Activated T-helper 1 cell treated with anti-CD3 and anti-CD28 coated beads, Interleukin-12 subunit alpha, Interleukin-12 subunit beta, Interleukin-2, Interleukin-4 antibody, amounts not matched to agents 30 ng/mL and 10 ng/mL and 1 ng/mL, durations not matched to agents 14 hours and 24 hours and 36 hours (primary cell): ENCODE measurements at regions of chr4 and their contacts with region 1.

Region 1: DNA sequence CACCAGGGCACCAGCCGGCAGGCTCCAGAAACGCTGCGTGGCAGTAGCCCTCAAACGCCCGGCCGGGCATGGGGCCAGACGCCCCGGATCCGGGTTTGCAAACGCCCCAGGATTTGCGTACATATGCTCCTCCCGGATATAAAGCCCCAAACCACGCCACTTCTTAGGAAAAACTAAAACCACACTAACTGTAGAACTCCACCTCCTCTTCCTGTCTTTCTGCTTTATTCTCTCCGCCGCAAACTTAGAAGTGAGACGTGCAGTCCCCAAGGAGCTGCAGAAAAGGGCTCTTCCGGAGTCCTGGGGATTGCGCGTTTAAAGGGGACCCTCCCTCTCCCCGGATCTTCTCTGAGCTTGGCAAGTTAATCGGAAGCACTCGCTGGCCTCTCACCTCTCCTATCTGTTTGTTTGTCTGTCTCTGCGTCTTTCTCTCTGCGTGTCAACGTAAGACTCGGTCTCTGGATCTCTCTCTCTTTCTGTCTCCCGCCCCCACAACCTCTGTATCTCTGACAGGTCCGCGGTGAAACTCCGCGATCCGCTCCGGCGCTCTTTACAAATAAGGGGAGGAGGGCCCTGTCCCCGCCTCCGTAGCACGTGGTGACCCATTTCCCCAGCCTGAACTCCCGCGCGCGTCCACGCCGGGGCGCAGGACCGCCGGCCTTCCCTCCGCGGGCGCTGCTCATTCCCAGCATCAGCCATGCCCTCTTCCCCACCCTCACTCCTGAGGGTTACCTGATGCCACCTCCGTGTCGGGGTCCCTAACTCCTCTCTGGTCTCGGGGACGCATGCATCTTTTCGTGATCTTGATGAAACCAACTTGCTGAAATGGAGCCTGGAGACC is at the start of gene SLC39A8:
- DNase-seq: peak; percentile 86
- H3K4me3 Mint-ChIP-seq: peak within 1 kb of the TSS; percentile 83
- H3K27ac Mint-ChIP-seq: peak within 1 kb of the TSS; percentile 98
- H3K4me1 Mint-ChIP-seq: peaks cover 48% of the 10 kb centered on the region
- H3K27me3 Mint-ChIP-seq: peaks cover 3% of the 10 kb centered on the region
- total RNA-seq, gene SLC39A8: 85.2 and 87.8 TPM in 2 replicates

Region 2: DNA sequence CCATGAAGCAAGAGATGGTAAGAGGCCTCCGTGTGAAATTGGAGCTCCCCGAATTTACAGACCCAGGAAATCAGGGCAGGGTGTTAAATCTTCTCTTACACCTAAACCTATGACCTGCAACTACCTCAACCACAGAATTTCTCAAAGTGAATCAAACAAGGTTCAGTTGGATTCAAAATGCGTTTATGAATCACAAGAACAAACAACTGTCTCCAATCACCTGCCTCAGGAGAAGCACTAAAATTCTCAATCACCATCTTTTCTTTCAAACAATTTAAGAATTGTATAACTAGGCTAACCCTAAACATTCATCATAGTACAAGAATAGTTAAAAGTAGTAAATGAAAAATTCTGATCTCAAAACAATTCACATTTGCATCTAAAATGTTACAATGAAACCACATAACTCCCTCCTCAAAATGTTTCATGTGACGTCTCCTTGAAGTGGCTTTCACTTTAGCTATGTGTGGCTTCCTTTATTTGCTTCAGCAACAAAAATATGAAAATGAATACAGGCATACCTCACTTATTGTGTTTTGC is 1017.0 kb before region 1 on chr4:
- intact Hi-C with region 1: loop called (anchors 1 kb)
- DNase-seq: peak; percentile 21
- H3K4me3 Mint-ChIP-seq: peak overlapping the region; percentile 45
- H3K27ac Mint-ChIP-seq: peak overlapping the region; percentile 81
- H3K4me1 Mint-ChIP-seq: peaks cover 31% of the 10 kb centered on the region
- H3K27me3 Mint-ChIP-seq: peaks cover 24% of the 10 kb centered on the region

Region 3: GRCh38 chr4:102104278-102104677 is 240.9 kb before region 1 on chr4:
- intact Hi-C with region 1: no loop called
- DNase-seq: no peak
- H3K4me3 Mint-ChIP-seq: no peak overlapping the region
- H3K27ac Mint-ChIP-seq: no peak overlapping the region
- H3K4me1 Mint-ChIP-seq: no peaks in the 10 kb centered on the region
- H3K27me3 Mint-ChIP-seq: no peaks in the 10 kb centered on the region

Region 4: DNA sequence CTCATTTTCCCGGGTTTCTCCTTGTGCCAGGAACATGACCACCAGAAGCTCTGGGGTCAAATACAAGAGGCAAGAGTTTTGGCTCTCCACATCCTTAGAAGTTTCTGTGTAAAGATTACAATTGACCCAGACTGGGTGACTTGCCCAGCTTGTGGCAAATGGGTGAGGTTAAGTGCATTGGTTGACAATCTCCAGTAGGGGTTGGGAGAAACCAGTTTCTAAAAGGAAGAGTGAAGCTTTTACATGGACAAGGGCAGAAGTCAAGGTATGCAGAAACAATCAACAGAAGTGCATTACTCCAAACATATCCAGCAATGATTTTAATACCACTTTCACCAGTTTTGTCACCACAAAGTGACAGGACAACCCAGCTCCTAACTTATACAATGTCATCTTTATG is 89.7 kb before region 1 on chr4:
- intact Hi-C with region 1: loop called (anchors 1 kb)
- DNase-seq: no peak
- H3K4me3 Mint-ChIP-seq: no peak overlapping the region
- H3K27ac Mint-ChIP-seq: no peak overlapping the region
- H3K4me1 Mint-ChIP-seq: no peaks in the 10 kb centered on the region
- H3K27me3 Mint-ChIP-seq: no peaks in the 10 kb centered on the region

Region 5: DNA sequence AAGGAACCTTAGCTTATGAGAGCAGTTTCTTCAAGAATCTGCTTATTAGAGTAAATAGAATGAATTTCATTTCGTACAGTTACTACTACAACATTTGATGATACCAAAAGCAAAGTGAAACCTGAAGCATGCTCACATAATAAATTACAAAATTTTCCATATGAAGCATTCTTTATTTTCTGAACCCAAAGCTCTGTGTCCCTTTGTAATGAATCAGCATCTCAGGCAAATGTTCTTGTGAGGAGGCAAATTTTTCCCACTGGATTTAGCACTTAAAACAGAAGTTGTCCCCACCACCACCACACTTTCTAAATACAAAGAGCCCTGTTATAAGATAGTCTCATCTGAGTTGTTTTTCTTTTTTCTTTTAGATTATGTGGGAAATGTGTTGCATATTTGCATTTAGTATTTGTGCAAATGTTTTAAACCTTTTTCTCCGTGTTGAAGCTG is 85.3 kb after region 1 on chr4:
- intact Hi-C with region 1: loop called (anchors 1 kb)
- DNase-seq: no peak
- H3K4me3 Mint-ChIP-seq: peak overlapping the region; percentile 87
- H3K27ac Mint-ChIP-seq: peak overlapping the region; percentile 82
- H3K4me1 Mint-ChIP-seq: peaks cover 15% of the 10 kb centered on the region
- H3K27me3 Mint-ChIP-seq: peaks cover 5% of the 10 kb centered on the region

Region 6: DNA sequence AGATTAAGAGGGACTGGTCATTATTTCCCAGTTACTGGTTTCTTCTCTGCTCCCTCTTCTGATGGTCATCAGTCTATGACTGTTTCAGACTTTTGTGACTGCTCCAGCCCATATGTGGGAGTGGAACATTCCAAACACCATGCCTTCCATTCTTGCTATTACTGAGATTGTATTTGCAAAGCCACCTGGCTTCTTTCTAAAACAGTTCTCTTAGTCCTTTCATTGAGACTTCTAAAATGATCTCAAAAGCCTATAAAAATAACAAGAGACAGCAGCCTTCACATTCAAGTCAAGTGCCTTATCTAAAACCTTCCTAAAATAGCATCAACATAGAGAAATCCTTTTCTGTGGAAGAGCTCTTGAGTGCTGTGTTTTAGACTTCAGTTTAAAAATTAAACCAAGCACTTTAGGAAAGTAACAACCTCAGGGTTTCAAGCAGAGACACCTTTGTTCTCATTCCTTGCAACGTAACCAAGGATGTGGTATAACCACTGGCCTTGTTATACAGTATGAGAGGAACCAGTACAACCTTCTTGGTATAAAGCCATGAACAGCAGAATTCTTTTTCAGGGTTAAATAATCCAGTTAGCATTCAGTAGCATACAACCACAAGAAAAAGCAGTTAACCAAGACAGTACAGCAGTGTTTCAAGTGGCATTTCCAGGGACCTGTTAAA is 253.1 kb after region 1 on chr4:
- intact Hi-C with region 1: loop called (anchors 2 kb)
- DNase-seq: peak; percentile 34
- H3K4me3 Mint-ChIP-seq: peak overlapping the region; percentile 37
- H3K27ac Mint-ChIP-seq: peak overlapping the region; percentile 89
- H3K4me1 Mint-ChIP-seq: peaks cover 78% of the 10 kb centered on the region
- H3K27me3 Mint-ChIP-seq: no peaks in the 10 kb centered on the region

Region 7: DNA sequence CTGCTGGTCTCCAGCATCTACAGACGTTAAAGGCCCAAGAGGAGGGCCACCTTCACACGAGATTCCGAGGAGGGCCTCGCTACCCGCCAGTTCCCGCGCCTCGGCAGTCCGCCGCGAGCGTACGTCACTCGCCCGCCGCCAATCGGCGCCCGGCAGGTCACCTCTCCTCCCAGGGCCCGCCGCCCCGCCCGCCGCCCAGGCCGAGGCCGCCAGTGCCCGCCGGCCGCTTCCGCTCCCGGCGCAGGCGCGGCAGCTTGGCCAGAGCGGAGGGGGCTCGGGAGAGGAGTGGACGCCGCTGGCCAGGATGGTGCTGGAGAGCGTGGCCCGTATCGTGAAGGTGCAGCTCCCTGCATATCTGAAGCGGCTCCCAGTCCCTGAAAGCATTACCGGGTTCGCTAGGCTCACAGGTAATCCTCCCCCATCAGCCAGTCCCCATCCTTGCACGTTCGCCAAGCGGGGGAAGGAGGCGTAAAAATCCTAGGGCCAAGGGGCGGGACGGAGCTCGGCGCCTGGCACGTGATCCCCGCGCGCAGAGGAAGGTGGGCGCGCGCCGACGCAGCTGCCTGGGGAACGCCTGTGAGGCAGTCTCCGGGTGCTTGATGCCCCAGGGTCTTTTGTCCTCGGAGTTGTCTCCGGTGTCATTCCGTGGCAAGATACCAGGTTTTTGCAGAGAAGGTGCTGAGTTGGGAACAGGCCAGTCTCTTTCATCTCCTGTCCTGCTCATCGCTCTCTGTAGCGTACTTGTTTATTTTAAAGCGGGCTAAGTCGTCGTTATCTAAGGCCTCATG is 523.8 kb after region 1 on chr4 and contains the start of gene CISD2:
- intact Hi-C with region 1: loop called (anchors 1 kb)
- DNase-seq: peak; percentile 91
- H3K4me3 Mint-ChIP-seq: peak within 1 kb of the TSS; percentile 93
- H3K27ac Mint-ChIP-seq: peak within 1 kb of the TSS; percentile 99
- H3K4me1 Mint-ChIP-seq: peaks cover 69% of the 10 kb centered on the region
- H3K27me3 Mint-ChIP-seq: no peaks in the 10 kb centered on the region
- total RNA-seq, gene CISD2: 41.2 and 50.7 TPM in 2 replicates

Region 8: DNA sequence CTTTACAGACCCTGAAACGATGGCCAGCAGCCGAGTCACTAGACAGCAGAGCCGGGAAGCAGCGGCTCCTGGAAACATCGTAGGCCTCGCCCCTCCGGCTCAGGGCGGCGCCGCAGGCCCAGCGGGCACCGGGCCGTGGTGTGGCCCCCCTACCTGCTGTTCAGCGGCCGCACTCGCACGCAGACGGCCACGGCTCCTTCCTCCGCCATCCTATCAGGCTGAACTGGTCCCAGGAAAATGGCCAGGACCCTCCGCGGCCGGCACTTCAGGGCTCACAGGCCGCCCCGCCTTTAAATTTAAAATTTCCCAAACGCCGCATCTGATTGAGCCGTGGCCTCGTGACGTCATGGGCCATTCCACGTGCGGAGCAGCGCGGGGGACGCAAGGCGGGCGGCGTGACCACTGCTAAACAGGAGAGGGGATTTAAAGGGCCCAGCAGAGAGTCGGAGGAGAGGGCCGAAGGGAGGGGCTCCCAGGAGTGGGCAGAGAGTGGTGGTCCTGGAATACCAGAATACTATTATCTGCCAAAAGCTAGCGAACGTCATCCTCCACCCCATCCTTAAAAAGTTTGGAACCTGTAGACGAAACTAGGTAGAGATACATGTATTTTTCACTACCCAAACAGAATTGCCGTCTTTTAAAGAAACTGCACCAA is 853.1 kb after region 1 on chr4 and contains the start of gene CENPE:
- intact Hi-C with region 1: loop called (anchors 5 kb)
- DNase-seq: peak; percentile 85
- H3K4me3 Mint-ChIP-seq: peak within 1 kb of the TSS; percentile 88
- H3K27ac Mint-ChIP-seq: peak within 1 kb of the TSS; percentile 99
- H3K4me1 Mint-ChIP-seq: peaks cover 23% of the 10 kb centered on the region
- H3K27me3 Mint-ChIP-seq: peaks cover 6% of the 10 kb centered on the region
- total RNA-seq, gene CENPE: 18.7 and 22.6 TPM in 2 replicates

Region 9: GRCh38 chr4:103887191-103887590 is 1542.0 kb after region 1 on chr4:
- intact Hi-C with region 1: no loop called
- DNase-seq: no peak
- H3K4me3 Mint-ChIP-seq: no peak overlapping the region
- H3K27ac Mint-ChIP-seq: no peak overlapping the region
- H3K4me1 Mint-ChIP-seq: no peaks in the 10 kb centered on the region
- H3K27me3 Mint-ChIP-seq: no peaks in the 10 kb centered on the region